ENCODE measurements at regions of chr14 and their contacts with region 1.

Region 1: GRCh38 chr14:50342221-50343078 is 30.3 kb downstream of the DMAC2L start:
- H3K4me3 Mint-ChIP-seq: no peak overlapping the region
- H3K27ac Mint-ChIP-seq: no peak overlapping the region
- H3K4me1 Mint-ChIP-seq: peaks cover 11% of the 10 kb centered on the region
- H3K27me3 Mint-ChIP-seq: no peaks in the 10 kb centered on the region

Region 2: GRCh38 chr14:50366589-50366988 is 24.1 kb after region 1 on chr14:
- intact Hi-C with region 1: no loop called
- H3K4me3 Mint-ChIP-seq: no peak overlapping the region
- H3K27ac Mint-ChIP-seq: peak overlapping the region; percentile 3
- H3K4me1 Mint-ChIP-seq: peaks cover 32% of the 10 kb centered on the region
- H3K27me3 Mint-ChIP-seq: peaks cover 5% of the 10 kb centered on the region

Region 3: GRCh38 chr14:50396631-50397390 is 54.4 kb after region 1 on chr14 and contains the start of gene CDKL1:
- intact Hi-C with region 1: loop called (anchors 10 kb)
- H3K4me3 Mint-ChIP-seq: peak within 1 kb of the TSS; percentile 76
- H3K27ac Mint-ChIP-seq: peak within 1 kb of the TSS; percentile 69
- H3K4me1 Mint-ChIP-seq: peaks cover 25% of the 10 kb centered on the region
- H3K27me3 Mint-ChIP-seq: peaks cover 7% of the 10 kb centered on the region

Region 4: GRCh38 chr14:50452979-50453705 is 110.7 kb after region 1 on chr14:
- intact Hi-C with region 1: no loop called
- H3K4me3 Mint-ChIP-seq: no peak overlapping the region
- H3K27ac Mint-ChIP-seq: no peak overlapping the region
- H3K4me1 Mint-ChIP-seq: no peaks in the 10 kb centered on the region
- H3K27me3 Mint-ChIP-seq: no peaks in the 10 kb centered on the region